CD4-positive, alpha-beta T cell (primary cell): ENCODE measurements at regions of chr1 and their contacts with region 1.

Region 1: GRCh38 chr1:156212833-156213643 is at the start of gene PMF1:
- DNase-seq: peak; percentile 90 to 97 (median 94)
- ATAC-seq: peak; percentile 96
- H3K4me3 ChIP-seq: peak within 1 kb of the TSS; percentile 69
- H3K4me3 Mint-ChIP-seq: peak within 1 kb of the TSS; percentile 98
- H3K27ac ChIP-seq: peak within 1 kb of the TSS; percentile 90 to 98
- H3K27ac Mint-ChIP-seq: peak within 1 kb of the TSS; percentile 99
- H3K4me1 ChIP-seq: peaks cover 46% of the 10 kb centered on the region
- H3K4me1 Mint-ChIP-seq: peaks cover 37% of the 10 kb centered on the region
- H3K27me3 ChIP-seq: no peaks in the 10 kb centered on the region
- H3K27me3 Mint-ChIP-seq: no peaks in the 10 kb centered on the region
- CTCF ChIP-seq: no peak
- total RNA-seq, gene PMF1: 58.0 to 61.2 TPM

Region 2: DNA sequence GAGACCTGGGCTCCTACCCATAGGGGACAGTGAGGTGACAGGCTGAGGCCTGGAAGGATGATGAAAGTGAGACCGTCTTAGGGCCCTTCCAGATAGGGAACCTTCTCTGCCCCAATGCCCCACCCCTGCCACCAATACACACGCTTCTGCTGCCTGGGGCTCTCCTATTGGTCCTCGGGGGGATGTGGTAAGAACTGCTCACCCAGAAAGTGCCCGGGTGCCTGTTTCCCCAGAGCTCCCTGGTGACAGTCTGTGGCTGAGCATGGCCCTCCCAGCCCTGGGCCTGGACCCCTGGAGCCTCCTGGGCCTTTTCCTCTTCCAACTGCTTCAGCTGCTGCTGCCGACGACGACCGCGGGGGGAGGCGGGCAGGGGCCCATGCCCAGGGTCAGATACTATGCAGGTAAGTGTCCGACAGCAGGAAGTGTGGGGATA is 58.7 kb before region 1 on chr1:
- CTCF ChIA-PET with region 1: no interaction called
- POLR2A ChIA-PET with region 1: interaction called, 11 read pairs
- intact Hi-C with region 1: no loop called
- DNase-seq: peak in 3 of 14 experiments; percentile 64 to 81 (median 73)
- ATAC-seq: peak; percentile 71
- H3K4me3 ChIP-seq: peak overlapping the region; percentile 34
- H3K4me3 Mint-ChIP-seq: peak overlapping the region; percentile 77
- H3K27ac ChIP-seq: no peak overlapping the region
- H3K27ac Mint-ChIP-seq: peak overlapping the region; percentile 66
- H3K4me1 ChIP-seq: peaks cover 43% of the 10 kb centered on the region
- H3K4me1 Mint-ChIP-seq: peaks cover 52% of the 10 kb centered on the region
- H3K27me3 ChIP-seq: no peaks in the 10 kb centered on the region
- H3K27me3 Mint-ChIP-seq: no peaks in the 10 kb centered on the region
- CTCF ChIP-seq: no peak

Region 3: DNA sequence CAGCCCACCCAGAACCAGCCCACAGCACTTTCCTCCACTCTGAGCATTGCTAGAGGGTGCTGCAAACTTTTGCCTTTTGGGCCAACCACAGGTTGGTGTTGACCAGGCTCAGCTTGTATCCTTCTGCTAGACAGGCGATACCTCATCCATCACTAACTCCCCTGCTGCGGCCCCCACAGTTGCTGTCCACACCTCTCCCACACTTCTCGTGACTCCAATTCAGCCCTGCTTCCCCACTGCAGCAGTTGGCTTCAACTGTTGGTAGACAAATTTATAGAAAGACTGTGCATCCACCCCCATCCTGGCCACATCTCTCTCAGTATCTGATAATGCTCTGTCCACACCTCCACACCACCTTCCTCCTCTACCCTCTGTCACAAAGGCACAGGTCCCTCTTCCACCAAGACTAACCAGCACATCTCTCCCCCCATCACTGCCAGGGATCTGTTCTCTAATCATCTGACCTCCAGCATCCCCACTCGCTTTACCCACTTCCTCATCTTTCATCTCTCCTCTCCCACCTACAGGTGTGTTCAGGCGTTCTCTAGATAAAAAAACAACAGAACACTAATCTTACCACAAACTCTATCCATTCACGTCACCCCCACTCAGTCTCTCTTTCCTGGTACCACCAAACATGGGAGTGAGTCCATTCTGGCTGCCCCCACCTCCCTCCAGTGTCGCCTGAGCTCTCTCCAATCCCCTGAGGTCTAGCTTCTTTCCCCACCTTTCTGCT is 35.0 kb before region 1 on chr1:
- CTCF ChIA-PET with region 1: no interaction called
- POLR2A ChIA-PET with region 1: interaction called, 16 read pairs
- intact Hi-C with region 1: no loop called
- DNase-seq: peak in 5 of 14 experiments; percentile 15 to 46 (median 44)
- ATAC-seq: peak; percentile 87
- H3K4me3 ChIP-seq: no peak overlapping the region
- H3K4me3 Mint-ChIP-seq: peak overlapping the region; percentile 49
- H3K27ac ChIP-seq: no peak overlapping the region
- H3K27ac Mint-ChIP-seq: peak overlapping the region; percentile 77
- H3K4me1 ChIP-seq: peaks cover 11% of the 10 kb centered on the region
- H3K4me1 Mint-ChIP-seq: peaks cover 24% of the 10 kb centered on the region
- H3K27me3 ChIP-seq: no peaks in the 10 kb centered on the region
- H3K27me3 Mint-ChIP-seq: no peaks in the 10 kb centered on the region
- CTCF ChIP-seq: no peak

Region 4: DNA sequence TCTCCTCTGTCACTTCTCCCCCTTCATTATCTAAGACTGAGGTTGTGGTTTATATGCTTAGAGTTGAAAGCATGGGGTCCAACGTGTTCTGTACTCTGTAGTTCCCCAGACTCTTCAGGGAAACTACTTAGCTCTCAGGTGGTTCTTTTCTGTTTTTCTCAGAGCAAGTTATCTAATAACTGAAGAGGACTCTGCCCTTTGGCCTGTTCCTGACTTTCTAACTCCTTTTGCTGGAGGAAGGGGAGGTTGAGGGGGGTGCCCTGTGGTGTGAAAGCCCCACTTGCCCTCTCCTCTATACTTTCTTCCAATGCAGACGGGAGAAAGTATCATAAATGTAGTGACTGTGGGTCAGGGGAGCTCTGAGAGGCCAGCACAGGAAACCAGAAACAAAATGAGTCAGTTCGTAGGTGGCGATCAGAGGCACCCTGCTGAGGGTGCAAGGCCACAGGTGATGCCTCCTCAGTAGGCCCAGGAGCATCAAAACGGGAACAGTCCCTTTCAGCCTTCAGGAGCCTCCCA is 14.1 kb before region 1 on chr1:
- CTCF ChIA-PET with region 1: interaction called, 3 read pairs
- POLR2A ChIA-PET with region 1: interaction called, 46 read pairs
- intact Hi-C with region 1: loop called in 1 of 2 experiments (anchors 1 kb)
- DNase-seq: no peak
- ATAC-seq: no peak
- H3K4me3 ChIP-seq: no peak overlapping the region
- H3K4me3 Mint-ChIP-seq: peak overlapping the region; percentile 12
- H3K27ac ChIP-seq: no peak overlapping the region
- H3K27ac Mint-ChIP-seq: peak overlapping the region; percentile 3
- H3K4me1 ChIP-seq: peaks cover 49% of the 10 kb centered on the region
- H3K4me1 Mint-ChIP-seq: peaks cover 53% of the 10 kb centered on the region
- H3K27me3 ChIP-seq: no peaks in the 10 kb centered on the region
- H3K27me3 Mint-ChIP-seq: no peaks in the 10 kb centered on the region
- CTCF ChIP-seq: no peak

Region 5: DNA sequence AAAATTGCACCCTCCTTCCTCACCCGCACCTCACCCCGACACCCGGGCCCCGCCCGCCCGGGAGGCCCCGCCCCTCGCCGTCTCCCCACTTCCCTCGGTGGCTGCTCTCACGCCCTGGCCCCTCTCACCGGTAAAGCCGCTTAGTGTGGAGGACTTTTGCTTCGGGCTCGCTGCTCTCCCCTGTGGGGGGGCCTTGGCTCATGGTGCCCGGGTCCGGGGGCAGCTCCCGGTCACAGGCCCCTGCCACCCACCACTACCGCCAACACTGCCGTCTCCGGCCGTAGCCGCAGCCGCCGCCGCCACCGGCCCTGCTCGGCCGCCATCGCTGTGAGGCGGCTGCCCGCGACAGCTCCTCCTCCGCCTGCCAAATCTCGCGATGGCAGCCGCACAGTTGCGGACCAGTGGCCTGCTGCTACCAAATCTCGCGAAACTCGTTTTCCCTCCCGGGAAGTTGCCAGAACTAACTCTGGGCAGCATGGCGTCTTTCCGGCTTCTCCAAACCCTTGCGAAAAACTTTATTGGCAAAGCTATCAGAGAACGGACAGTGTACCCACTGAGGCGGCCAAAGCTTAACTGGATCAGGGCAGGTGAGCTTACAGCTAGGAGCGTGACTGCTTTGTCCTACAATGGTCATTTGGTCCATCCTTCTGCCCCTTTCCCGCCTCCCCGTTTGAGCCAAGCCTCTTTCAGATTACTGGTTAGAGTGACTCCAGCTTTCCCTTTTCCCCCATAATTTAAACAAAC is 69.6 kb after region 1 on chr1 and contains the start of gene SMG5:
- CTCF ChIA-PET with region 1: interaction called, 3 read pairs
- POLR2A ChIA-PET with region 1: interaction called, 33 read pairs
- intact Hi-C with region 1: no loop called
- DNase-seq: peak; percentile 90 to 99 (median 94)
- ATAC-seq: peak; percentile 94
- H3K4me3 ChIP-seq: peak within 1 kb of the TSS; percentile 79
- H3K4me3 Mint-ChIP-seq: peak within 1 kb of the TSS; percentile 97
- H3K27ac ChIP-seq: peak within 1 kb of the TSS; percentile 82
- H3K27ac Mint-ChIP-seq: peak within 1 kb of the TSS; percentile 86
- H3K4me1 ChIP-seq: peaks cover 36% of the 10 kb centered on the region
- H3K4me1 Mint-ChIP-seq: peaks cover 47% of the 10 kb centered on the region
- H3K27me3 ChIP-seq: no peaks in the 10 kb centered on the region
- H3K27me3 Mint-ChIP-seq: no peaks in the 10 kb centered on the region
- CTCF ChIP-seq: no peak
- total RNA-seq, gene SMG5: 51.6 to 56.1 TPM

Region 6: DNA sequence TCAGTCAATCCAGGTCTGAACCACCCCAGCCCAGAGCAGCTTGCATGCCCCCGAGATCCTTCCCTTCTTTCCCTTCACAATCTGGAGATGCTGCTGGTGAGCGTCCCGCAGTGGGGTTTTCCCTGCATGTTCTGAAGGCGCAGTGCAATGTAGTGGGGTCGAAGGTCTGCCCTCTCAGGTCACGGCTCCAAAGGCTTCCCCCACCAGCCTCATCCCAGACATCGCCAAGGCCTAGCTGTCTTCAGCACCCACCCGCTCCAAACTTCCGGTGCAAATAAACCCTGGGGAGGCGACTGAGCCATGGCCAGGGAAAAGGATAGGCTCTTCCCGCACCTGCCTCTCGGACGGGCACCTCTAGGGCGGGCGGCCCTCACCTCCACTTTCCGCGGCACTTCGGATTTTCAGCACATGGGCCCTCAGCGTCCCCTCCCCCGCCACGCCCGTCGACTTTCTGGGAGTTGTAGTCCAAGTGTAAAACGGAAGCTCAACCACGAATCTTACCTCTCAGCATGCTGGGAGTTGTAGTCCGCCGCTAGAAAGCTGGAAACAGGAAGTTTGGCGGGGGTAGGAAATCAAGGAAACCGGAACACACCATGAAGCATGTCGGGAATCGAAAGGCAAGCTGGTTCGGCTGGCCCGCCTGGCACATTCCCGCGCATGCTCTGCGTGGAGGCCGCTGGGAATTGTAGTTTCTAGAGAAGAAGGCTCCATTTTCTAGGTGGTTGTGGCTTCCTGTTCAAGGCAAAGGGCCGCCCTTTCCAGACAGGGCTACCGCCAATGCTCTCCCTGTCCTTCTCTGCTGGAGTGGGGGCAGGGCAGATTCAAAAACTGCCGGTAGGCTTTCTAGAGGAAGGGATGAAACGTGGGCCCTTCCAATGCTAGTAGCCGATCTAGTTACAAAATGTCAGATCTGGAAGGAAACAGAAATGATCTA is 527.9 kb after region 1 on chr1 and contains the start of gene MRPL24:
- CTCF ChIA-PET with region 1: no interaction called
- POLR2A ChIA-PET with region 1: no interaction called
- intact Hi-C with region 1: loop called in 1 of 2 experiments (anchors 10 kb)
- DNase-seq: peak; percentile 92 to 100 (median 96)
- ATAC-seq: peak; percentile 89
- H3K4me3 ChIP-seq: peak within 1 kb of the TSS; percentile 74
- H3K4me3 Mint-ChIP-seq: peak within 1 kb of the TSS; percentile 94
- H3K27ac ChIP-seq: peak within 1 kb of the TSS; percentile 82 to 86
- H3K27ac Mint-ChIP-seq: peak within 1 kb of the TSS; percentile 89
- H3K4me1 ChIP-seq: peaks cover 28% of the 10 kb centered on the region
- H3K4me1 Mint-ChIP-seq: peaks cover 40% of the 10 kb centered on the region
- H3K27me3 ChIP-seq: no peaks in the 10 kb centered on the region
- H3K27me3 Mint-ChIP-seq: no peaks in the 10 kb centered on the region
- CTCF ChIP-seq: no peak
- total RNA-seq, gene MRPL24: 11.7 to 11.9 TPM